Activated CD8-positive, alpha-beta T cell treated with anti-CD3 and anti-CD28 coated beads for 36 hours (primary cell): ENCODE measurements at regions of chr1 and their contacts with region 1.

Region 1: DNA sequence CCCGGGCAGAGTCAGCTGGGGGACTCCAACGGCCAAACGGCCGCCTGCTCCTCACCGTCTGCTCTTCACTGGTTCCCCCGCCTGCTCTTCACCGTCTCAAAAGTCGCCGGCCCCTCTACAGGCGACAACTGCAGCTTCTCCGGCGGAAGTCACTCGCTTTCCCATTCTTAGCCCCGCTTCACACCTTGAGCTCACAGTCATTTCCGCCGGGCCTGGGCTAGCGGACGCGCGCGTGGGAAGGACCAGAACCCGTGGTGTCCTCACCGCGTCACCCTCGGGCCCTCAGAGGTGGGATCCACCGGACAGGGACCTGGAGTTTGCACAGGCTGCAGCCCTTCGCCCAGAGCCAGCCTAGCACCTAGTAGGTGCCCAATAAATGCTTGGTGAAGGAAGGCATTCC is 27.9 kb upstream of the HJV start:
- DNase-seq: peak; percentile 16
- ATAC-seq: no peak
- H3K4me3 Mint-ChIP-seq: no peak overlapping the region
- H3K27ac Mint-ChIP-seq: no peak overlapping the region
- H3K4me1 Mint-ChIP-seq: peaks cover 21% of the 10 kb centered on the region
- H3K27me3 Mint-ChIP-seq: no peaks in the 10 kb centered on the region
- CTCF ChIP-seq: no peak

Region 2: GRCh38 chr1:145891587-145892485 is 157.6 kb before region 1 on chr1:
- CTCF ChIA-PET with region 1: no interaction called
- POLR2A ChIA-PET with region 1: no interaction called
- intact Hi-C with region 1: no loop called
- DNase-seq: peak; percentile 77
- ATAC-seq: peak; percentile 84
- H3K4me3 Mint-ChIP-seq: no peak overlapping the region
- H3K27ac Mint-ChIP-seq: no peak overlapping the region
- H3K4me1 Mint-ChIP-seq: peaks cover under 1% of the 10 kb centered on the region
- H3K27me3 Mint-ChIP-seq: peaks cover under 1% of the 10 kb centered on the region
- CTCF ChIP-seq: peak; percentile 86

Region 3: DNA sequence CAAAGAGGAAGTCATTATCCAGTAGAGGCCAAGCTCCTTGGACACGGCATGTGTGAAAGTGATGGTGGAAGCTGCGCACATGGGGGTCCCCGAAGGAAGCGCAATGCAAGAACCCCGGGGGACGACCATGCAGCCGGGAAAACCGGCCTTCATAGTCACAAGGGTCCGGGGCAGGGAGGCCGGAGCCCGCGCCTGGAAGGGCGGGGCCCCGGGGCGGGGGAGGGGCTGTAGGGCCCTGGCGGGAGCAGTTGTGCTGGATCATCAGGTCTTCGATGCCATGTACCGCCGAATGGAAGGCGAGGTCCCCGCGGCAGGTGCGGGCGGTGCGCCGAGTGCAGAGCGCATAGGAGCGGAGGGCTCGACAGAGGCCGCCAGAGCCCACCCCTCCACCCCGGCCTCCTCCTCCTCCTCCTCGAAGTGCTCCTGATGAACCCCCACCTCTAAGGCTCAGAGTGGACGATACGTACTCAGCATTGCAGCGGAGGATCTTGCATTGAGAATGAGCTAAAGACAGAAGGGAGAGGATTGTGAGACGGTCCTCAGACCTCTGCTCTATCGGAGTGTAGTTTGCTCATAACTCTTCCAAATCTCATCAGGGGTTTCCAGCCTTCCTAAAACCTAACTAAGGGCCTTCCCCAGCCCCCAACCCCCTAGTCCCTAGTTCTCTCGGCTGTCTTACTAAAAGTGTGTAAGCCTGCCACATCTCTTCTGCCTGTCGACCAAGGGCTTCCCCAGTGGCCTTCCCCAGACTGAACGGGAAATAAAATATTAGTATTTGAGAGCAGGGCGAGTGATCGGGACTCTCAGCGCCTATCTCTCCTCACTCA is 30.0 kb before region 1 on chr1:
- CTCF ChIA-PET with region 1: no interaction called
- POLR2A ChIA-PET with region 1: interaction called, 12 read pairs
- intact Hi-C with region 1: no loop called
- DNase-seq: no peak
- ATAC-seq: peak; percentile 39
- H3K4me3 Mint-ChIP-seq: peak overlapping the region; percentile 22
- H3K27ac Mint-ChIP-seq: no peak overlapping the region
- H3K4me1 Mint-ChIP-seq: peaks cover 7% of the 10 kb centered on the region
- H3K27me3 Mint-ChIP-seq: peaks cover 37% of the 10 kb centered on the region
- CTCF ChIP-seq: no peak

Region 4: GRCh38 chr1:146036965-146037646 is 12.3 kb before region 1 on chr1:
- CTCF ChIA-PET with region 1: interaction called, 10 read pairs
- POLR2A ChIA-PET with region 1: interaction called, 202 read pairs
- intact Hi-C with region 1: no loop called
- DNase-seq: peak; percentile 92
- ATAC-seq: peak; percentile 35
- H3K4me3 Mint-ChIP-seq: peak overlapping the region; percentile 92
- H3K27ac Mint-ChIP-seq: peak overlapping the region; percentile 98
- H3K4me1 Mint-ChIP-seq: peaks cover 25% of the 10 kb centered on the region
- H3K27me3 Mint-ChIP-seq: peaks cover 7% of the 10 kb centered on the region
- CTCF ChIP-seq: no peak